ENCODE measurements at regions of chr3 and their contacts with region 1.

Region 1: DNA sequence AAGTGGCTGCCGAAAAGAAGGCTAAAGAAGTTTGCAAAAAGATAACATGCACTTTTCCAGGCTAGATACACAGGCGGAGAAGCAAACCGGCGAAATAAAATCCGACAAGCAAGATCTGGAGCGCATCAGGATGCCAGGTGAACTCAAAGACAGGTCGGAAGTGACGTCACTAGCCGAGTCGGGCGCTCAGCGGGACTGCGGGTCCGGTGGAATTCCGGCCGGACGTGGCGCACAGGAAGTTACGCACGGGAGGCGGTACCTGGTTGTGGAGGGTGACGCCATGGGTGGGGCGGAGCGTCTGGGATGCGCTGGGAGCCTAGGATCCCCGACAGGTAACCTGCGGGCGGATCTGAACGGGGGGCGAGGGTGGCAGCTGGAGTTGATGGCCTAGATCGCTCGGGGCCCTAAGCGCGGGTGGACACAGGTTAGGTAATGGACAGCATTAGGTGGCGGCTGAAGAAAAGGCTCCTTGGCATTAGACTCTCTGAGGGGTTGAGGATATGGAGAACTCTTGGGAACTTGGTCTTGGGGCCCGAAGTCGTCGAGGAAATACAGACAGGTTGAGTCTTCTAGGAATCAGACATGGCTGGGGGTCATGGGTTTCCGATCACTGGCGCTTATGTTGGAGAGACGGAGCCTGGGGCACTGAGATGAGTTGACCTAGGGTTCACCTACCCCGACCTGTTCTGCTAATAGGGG is 29.0 kb upstream of the EHHADH start:
- DNase-seq: peak; percentile 98
- H3K4me3 Mint-ChIP-seq: peak overlapping the region; percentile 99
- H3K27ac Mint-ChIP-seq: peak overlapping the region; percentile 77
- H3K4me1 Mint-ChIP-seq: peaks cover 23% of the 10 kb centered on the region
- H3K27me3 Mint-ChIP-seq: peaks cover 18% of the 10 kb centered on the region

Region 2: GRCh38 chr3:185253645-185254410 is 29.0 kb before region 1 on chr3 and contains the start of gene EHHADH:
- CTCF ChIA-PET with region 1: interaction called, 3 read pairs
- intact Hi-C with region 1: loop called (anchors 1 kb)
- DNase-seq: peak; percentile 66
- H3K4me3 Mint-ChIP-seq: peak within 1 kb of the TSS; percentile 67
- H3K27ac Mint-ChIP-seq: no peak within 1 kb of the TSS
- H3K4me1 Mint-ChIP-seq: peaks cover 4% of the 10 kb centered on the region
- H3K27me3 Mint-ChIP-seq: peaks cover 10% of the 10 kb centered on the region
- total RNA-seq, gene EHHADH: 2.9 to 3.5 TPM

Region 3: GRCh38 chr3:185733980-185734724 is 451.3 kb after region 1 on chr3:
- CTCF ChIA-PET with region 1: no interaction called
- intact Hi-C with region 1: no loop called
- DNase-seq: peak; percentile 50
- H3K4me3 Mint-ChIP-seq: no peak overlapping the region
- H3K27ac Mint-ChIP-seq: no peak overlapping the region
- H3K4me1 Mint-ChIP-seq: no peaks in the 10 kb centered on the region
- H3K27me3 Mint-ChIP-seq: peaks cover 5% of the 10 kb centered on the region

Measured in activated naive CD4-positive, alpha-beta T cell treated with anti-CD3 and anti-CD28 coated beads for 36 hours (primary cell).